ENCODE measurements at regions of chr3 and their contacts with region 1.

Region 1: DNA sequence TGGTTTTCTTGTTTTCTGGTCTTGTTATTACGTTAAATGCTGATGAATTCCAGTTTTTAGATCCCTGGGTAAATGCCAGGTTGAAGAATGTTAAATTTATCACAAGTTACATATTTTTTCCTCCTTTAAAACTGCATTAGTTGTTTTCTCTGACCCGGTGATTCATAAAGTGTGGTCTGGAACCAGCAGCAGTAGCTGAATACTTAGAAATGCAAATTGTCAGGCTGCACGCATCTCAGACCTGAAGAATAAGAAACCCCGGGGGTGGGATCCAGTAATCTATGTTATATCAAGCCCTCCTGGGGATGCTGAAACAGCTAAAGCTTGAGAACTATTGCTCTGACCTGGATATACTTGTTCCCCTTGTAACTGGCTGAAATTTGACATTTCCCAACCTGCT is 69.1 kb downstream of the PEX5L start:
- DNase-seq: no peak
- ATAC-seq: peak; percentile 79
- H3K4me3 ChIP-seq: peak overlapping the region; percentile 10; the same call in 1 of the 2 replicates
- H3K27ac ChIP-seq: peak overlapping the region; percentile 30; the same call in 1 of the 2 replicates
- H3K4me1 ChIP-seq: peaks cover under 1% of the 10 kb centered on the region; the same call in 1 of the 2 replicates
- H3K27me3 ChIP-seq: no peaks in the 10 kb centered on the region
- CTCF ChIP-seq: no peak
- EP300 ChIP-seq: no peak
- POLR2A ChIP-seq: no peak
- RAD21 ChIP-seq: no peak

Region 2: DNA sequence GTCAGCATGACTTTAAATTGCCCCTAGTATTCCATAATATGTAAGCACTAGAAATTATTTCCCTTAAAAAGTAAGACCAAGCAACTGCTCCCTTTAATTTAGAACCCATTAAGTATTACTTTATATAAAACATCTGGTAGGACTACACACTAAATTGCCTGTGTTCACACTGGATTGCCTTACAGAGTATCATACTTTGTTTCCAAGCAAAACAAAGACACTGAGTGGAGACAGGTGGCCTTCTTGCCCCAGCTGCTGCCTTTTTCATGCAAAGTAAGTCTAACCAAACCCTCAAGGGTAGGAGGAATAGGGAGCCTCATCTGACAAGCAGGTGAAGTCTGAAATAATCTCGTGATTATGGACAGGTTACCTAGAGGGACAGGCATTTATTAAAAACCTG is 18.2 kb before region 1 on chr3:
- CTCF ChIA-PET with region 1: interaction called, 3 read pairs
- POLR2A ChIA-PET with region 1: interaction called, 3 read pairs
- RAD21 ChIA-PET with region 1: interaction called, 3 read pairs
- SMC1A ChIA-PET with region 1: interaction called, 19 read pairs
- in situ Hi-C with region 1: no loop called
- intact Hi-C with region 1: no loop called
- DNase-seq: no peak
- ATAC-seq: peak; percentile 61
- H3K4me3 ChIP-seq: no peak overlapping the region
- H3K27ac ChIP-seq: no peak overlapping the region
- H3K4me1 ChIP-seq: no peaks in the 10 kb centered on the region
- H3K27me3 ChIP-seq: no peaks in the 10 kb centered on the region
- CTCF ChIP-seq: no peak
- EP300 ChIP-seq: no peak
- POLR2A ChIP-seq: no peak
- RAD21 ChIP-seq: no peak

Region 3: DNA sequence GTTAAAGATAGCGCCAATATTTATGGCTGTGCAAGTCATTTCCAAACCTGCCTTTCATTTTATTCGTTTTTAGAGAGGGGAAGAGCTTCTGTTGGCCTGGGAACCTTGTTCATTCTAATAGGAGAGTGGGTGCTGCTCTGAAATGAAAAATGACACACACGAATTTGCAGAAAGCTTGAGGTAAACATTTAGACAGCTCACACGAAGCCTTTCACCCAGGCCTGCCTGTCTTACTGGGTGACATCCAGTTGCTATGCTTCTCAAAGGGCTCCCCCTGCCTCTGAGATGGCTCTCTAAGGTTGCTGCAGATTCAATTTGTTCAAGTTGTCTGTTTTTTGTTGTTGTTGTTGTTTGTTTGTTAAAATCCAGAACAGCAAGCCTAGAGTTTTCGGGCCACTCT is 50.9 kb after region 1 on chr3:
- CTCF ChIA-PET with region 1: interaction called, 5 read pairs
- POLR2A ChIA-PET with region 1: no interaction called
- RAD21 ChIA-PET with region 1: interaction called, 3 read pairs
- SMC1A ChIA-PET with region 1: interaction called, 11 read pairs
- in situ Hi-C with region 1: no loop called
- intact Hi-C with region 1: no loop called
- DNase-seq: no peak
- ATAC-seq: peak; percentile 85
- H3K4me3 ChIP-seq: no peak overlapping the region
- H3K27ac ChIP-seq: no peak overlapping the region
- H3K4me1 ChIP-seq: no peaks in the 10 kb centered on the region
- H3K27me3 ChIP-seq: no peaks in the 10 kb centered on the region
- CTCF ChIP-seq: peak; percentile 8 to 50 (median 35); a peak in 3 of 6 replicates
- EP300 ChIP-seq: no peak
- POLR2A ChIP-seq: no peak
- RAD21 ChIP-seq: peak; percentile 65

Measured in GM12878 (cell line).